A673 (cell line): ENCODE measurements at regions of chr11 and their contacts with region 1.

Region 1: GRCh38 chr11:92436034-92436920 is 211.7 kb downstream of the FAT3 start:
- DNase-seq: no peak
- H3K4me3 ChIP-seq: no peak overlapping the region
- H3K27ac ChIP-seq: peak overlapping the region; percentile 12
- H3K4me1 ChIP-seq: peaks cover 7% of the 10 kb centered on the region
- H3K27me3 ChIP-seq: no peaks in the 10 kb centered on the region
- CTCF ChIP-seq: no peak

Region 2: GRCh38 chr11:91495837-91496236 is 940.4 kb before region 1 on chr11:
- CTCF ChIA-PET with region 1: no interaction called
- POLR2A ChIA-PET with region 1: no interaction called
- intact Hi-C with region 1: loop called (anchors 5 kb)
- DNase-seq: no peak
- H3K4me3 ChIP-seq: no peak overlapping the region
- H3K27ac ChIP-seq: no peak overlapping the region
- H3K4me1 ChIP-seq: peaks cover 13% of the 10 kb centered on the region
- H3K27me3 ChIP-seq: no peaks in the 10 kb centered on the region
- CTCF ChIP-seq: peak; percentile 28; the same call in 1 of the 2 replicates